ENCODE measurements at regions of chr13 and their contacts with region 1.

Region 1: DNA sequence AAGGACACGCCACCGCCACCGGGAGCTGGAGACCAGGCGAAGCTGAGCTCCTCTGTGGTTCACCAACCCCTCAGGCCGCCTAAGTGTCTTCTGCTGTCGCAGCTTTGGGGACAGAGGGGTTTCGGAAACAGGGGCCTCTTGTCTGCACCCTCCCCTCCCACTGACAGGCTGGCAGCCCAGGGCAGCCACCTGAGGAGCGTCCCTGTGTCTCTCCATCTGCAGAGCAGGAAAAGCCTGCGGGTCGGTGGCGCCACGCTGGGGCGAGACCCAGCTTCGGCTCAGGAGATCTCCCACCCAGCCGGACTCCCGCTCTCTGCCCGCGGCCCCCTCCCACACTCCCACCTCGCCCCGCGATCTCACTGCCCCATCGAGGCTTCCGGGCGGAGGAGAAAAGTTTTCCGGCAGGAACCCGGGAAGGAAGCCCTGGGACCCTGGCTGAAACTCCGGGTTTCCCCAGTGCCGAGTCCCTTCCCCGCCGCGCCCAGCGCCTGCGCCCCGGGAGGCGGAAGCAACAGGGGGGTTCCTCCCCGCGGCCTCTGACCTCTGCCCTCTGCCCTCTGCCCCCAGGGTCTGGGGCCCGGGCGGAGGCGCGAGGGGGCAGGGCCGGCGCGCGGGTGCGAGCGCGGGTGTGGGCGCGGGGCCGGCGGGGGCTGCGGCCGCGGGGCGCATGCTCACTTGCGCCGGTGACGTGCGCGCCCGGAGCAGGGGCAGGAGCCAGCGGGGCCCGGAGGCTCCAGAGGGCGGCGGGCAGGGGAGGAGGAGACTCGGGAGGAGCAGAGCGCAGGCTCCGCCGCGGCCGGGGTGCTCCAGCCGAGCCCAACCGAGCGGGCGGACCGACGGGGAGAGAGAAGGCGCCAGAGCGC is at the start of gene ATP11A:
- H3K4me3 Mint-ChIP-seq: peak within 1 kb of the TSS; percentile 90
- H3K27ac Mint-ChIP-seq: peak within 1 kb of the TSS; percentile 95
- H3K4me1 Mint-ChIP-seq: peaks cover 51% of the 10 kb centered on the region
- H3K27me3 Mint-ChIP-seq: no peaks in the 10 kb centered on the region

Region 2: DNA sequence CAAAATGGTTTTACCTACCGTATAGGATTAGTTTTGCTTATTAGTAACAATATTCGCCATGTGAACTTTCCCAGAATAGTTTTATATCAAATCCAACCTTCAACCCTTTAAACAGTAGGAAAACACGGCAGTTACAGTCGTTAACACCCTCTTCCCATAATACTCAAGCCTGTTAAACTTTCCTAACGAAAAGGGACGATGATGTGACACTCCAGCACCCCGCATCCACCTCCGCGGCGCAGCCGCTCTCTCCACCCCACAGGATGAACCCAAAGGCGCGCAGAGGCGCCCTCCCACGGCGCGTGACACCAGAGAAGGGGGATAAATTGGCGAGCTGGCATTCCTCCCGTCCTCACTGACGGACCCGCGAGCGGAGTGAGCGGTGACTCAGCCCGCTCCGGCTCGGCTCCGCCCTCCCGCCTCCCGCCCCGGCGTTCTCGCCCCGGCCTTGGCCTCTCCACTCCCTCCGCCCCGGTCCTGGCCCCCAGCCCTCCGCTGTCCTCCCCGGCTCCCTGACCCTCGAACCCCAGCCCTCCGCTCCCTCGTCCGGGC is 102.2 kb before region 1 on chr13:
- intact Hi-C with region 1: loop called (anchors 10 kb)
- H3K4me3 Mint-ChIP-seq: peak overlapping the region; percentile 92
- H3K27ac Mint-ChIP-seq: peak overlapping the region; percentile 96
- H3K4me1 Mint-ChIP-seq: peaks cover 41% of the 10 kb centered on the region
- H3K27me3 Mint-ChIP-seq: no peaks in the 10 kb centered on the region

Region 3: GRCh38 chr13:112767506-112768471 is 78.3 kb after region 1 on chr13:
- intact Hi-C with region 1: loop called (anchors 10 kb)
- H3K4me3 Mint-ChIP-seq: peak overlapping the region; percentile 81
- H3K27ac Mint-ChIP-seq: peak overlapping the region; percentile 96
- H3K4me1 Mint-ChIP-seq: peaks cover 54% of the 10 kb centered on the region
- H3K27me3 Mint-ChIP-seq: no peaks in the 10 kb centered on the region

Region 4: GRCh38 chr13:113208424-113209335 is 519.1 kb after region 1 on chr13 and contains the start of gene PCID2:
- intact Hi-C with region 1: loop called (anchors 10 kb)
- H3K4me3 Mint-ChIP-seq: peak within 1 kb of the TSS; percentile 81
- H3K27ac Mint-ChIP-seq: peak within 1 kb of the TSS; percentile 82
- H3K4me1 Mint-ChIP-seq: peaks cover 66% of the 10 kb centered on the region
- H3K27me3 Mint-ChIP-seq: no peaks in the 10 kb centered on the region